Prostate gland (tissue), 2 donors: ENCODE measurements at regions of chr3 and their contacts with region 1.

Region 1: DNA sequence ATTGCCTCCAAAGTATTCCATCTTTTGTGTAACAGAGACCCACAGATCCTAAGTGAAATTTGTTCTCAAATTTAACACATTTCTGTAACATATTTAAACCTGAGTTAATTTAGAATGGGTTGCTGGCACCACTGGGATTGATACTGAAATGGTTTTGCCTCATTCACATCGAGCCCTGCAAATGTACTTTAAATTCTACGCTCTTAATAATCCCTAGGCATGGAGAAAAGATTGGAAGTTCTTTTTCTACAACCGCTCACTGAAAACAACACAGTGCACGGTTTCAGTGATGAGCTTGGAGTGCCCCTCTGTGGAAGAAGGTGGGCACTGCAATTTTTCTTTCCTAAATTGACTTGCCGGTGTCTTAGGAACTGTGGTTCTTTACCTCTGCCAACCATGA is 109.9 kb upstream of the ATP11B start:
- DNase-seq: peak; percentile 65
- H3K4me3 ChIP-seq: peak overlapping the region in 1 of 2 donors; percentile 46
- H3K27ac ChIP-seq: peak overlapping the region in 1 of 2 donors; percentile 29
- H3K4me1 ChIP-seq: no peaks in the 10 kb centered on the region
- H3K27me3 ChIP-seq: no peaks in the 10 kb centered on the region
- CTCF ChIP-seq: peak; percentile 61 to 87 (median 79)
- POLR2A ChIP-seq: no peak

Region 2: DNA sequence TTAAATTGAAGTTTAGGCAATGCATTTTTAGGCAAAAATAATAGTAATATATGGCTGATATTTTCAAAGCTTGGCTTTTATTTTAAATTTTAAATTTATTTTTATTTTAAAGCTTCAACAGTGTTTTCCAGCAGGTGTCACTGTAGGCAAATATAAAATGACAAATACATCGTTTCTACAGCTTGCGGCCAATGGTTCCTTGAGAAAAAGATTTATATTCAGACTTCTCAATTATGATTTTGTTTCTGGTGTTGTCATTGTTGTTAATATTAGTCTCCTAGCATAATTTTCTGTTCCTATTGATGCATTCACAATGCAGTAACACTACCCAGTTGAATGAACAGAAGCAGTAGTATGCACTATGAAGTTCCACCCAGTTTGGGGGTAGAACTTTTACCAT is 1473.2 kb before region 1 on chr3:
- intact Hi-C with region 1: loop called (anchors 5 kb)
- DNase-seq: no peak
- H3K4me3 ChIP-seq: no peak overlapping the region
- H3K27ac ChIP-seq: no peak overlapping the region
- H3K4me1 ChIP-seq: no peaks in the 10 kb centered on the region
- H3K27me3 ChIP-seq: no peaks in the 10 kb centered on the region
- CTCF ChIP-seq: peak in 3 of 4 experiments; percentile 7 to 26 (median 21)
- POLR2A ChIP-seq: no peak

Region 3: GRCh38 chr3:181709537-181710279 is 973.7 kb before region 1 on chr3:
- intact Hi-C with region 1: loop called (anchors 5 kb)
- DNase-seq: peak; percentile 81
- H3K4me3 ChIP-seq: no peak overlapping the region
- H3K27ac ChIP-seq: no peak overlapping the region
- H3K4me1 ChIP-seq: peaks cover 3% of the 10 kb centered on the region
- H3K27me3 ChIP-seq: peaks cover 8% of the 10 kb centered on the region
- CTCF ChIP-seq: peak; percentile 79 to 91 (median 82)
- POLR2A ChIP-seq: no peak

Region 4: GRCh38 chr3:182508916-182509711 is 174.3 kb before region 1 on chr3:
- intact Hi-C with region 1: no loop called
- DNase-seq: no peak
- H3K4me3 ChIP-seq: no peak overlapping the region
- H3K27ac ChIP-seq: no peak overlapping the region
- H3K4me1 ChIP-seq: no peaks in the 10 kb centered on the region
- H3K27me3 ChIP-seq: no peaks in the 10 kb centered on the region
- CTCF ChIP-seq: no peak
- POLR2A ChIP-seq: no peak